Activated CD4-positive, alpha-beta T cell treated with anti-CD3 and anti-CD28 coated beads, Interleukin-2, amount 10 ng/mL, durations not matched to agents 24 days and 14 days (primary cell): ENCODE measurements at regions of chr3 and their contacts with region 1.

Region 1: GRCh38 chr3:72339116-72340030 is 508.9 kb downstream of the SHQ1 start:
- DNase-seq: no peak
- H3K4me3 Mint-ChIP-seq: no peak overlapping the region
- H3K27ac Mint-ChIP-seq: no peak overlapping the region
- H3K4me1 Mint-ChIP-seq: peaks cover 32% of the 10 kb centered on the region
- H3K27me3 Mint-ChIP-seq: no peaks in the 10 kb centered on the region

Region 2: DNA sequence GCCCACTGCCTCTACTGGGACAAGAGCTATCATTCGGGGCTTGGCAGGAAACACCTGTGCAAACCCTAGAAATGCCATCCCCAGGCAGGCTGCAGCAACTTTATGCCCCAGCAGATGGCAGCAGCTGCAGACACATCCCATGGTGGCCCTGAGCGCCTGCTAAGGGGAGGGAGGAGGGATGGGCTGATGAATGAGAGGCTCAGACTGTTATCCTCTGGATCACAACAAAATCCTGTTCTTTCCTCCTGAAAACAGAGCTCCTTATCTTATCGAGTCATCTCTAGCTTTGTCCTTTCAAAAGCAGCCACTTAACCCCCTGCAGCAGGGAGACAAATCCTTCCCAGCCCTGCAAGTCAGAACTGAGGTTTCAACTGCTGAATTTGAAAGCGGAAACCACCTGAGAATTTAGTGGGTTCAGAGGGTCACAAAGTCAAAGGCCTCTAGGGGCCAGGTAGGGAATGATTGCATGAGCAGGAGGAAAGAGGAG is 463.9 kb before region 1 on chr3:
- intact Hi-C with region 1: loop called (anchors 2 kb)
- DNase-seq: peak; percentile 93
- H3K4me3 Mint-ChIP-seq: peak overlapping the region; percentile 14
- H3K27ac Mint-ChIP-seq: peak overlapping the region; percentile 74
- H3K4me1 Mint-ChIP-seq: peaks cover 28% of the 10 kb centered on the region
- H3K27me3 Mint-ChIP-seq: peaks cover 12% of the 10 kb centered on the region

Region 3: GRCh38 chr3:72134989-72135451 is 204.4 kb before region 1 on chr3:
- intact Hi-C with region 1: loop called (anchors 2 kb)
- DNase-seq: peak; percentile 66
- H3K4me3 Mint-ChIP-seq: peak overlapping the region; percentile 75
- H3K27ac Mint-ChIP-seq: peak overlapping the region; percentile 96
- H3K4me1 Mint-ChIP-seq: peaks cover 39% of the 10 kb centered on the region
- H3K27me3 Mint-ChIP-seq: no peaks in the 10 kb centered on the region

Region 4: GRCh38 chr3:72375237-72376076 is 36.1 kb after region 1 on chr3:
- intact Hi-C with region 1: loop called (anchors 1 kb)
- DNase-seq: peak; percentile 68
- H3K4me3 Mint-ChIP-seq: peak overlapping the region; percentile 43
- H3K27ac Mint-ChIP-seq: peak overlapping the region; percentile 80
- H3K4me1 Mint-ChIP-seq: peaks cover 47% of the 10 kb centered on the region
- H3K27me3 Mint-ChIP-seq: no peaks in the 10 kb centered on the region

Region 5: DNA sequence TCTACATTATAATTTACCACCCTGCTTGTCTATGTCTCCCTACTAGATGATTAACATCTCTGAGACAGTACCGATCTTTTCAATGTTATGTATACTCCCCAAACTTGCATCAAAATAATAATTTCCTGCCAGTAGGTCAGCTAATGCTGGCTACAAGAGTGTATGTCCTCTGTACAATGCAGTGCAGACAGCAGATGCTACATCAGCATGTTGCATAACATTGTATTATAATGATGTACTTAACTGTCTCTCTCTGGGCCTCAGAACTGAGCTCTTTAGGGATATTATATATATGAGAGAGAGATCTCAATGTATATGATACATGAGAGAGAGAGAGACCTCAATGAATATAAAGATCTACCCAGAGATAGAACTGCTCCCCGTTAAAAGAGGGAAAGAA is 52.3 kb after region 1 on chr3:
- intact Hi-C with region 1: no loop called
- DNase-seq: no peak
- H3K4me3 Mint-ChIP-seq: no peak overlapping the region
- H3K27ac Mint-ChIP-seq: no peak overlapping the region
- H3K4me1 Mint-ChIP-seq: peaks cover 29% of the 10 kb centered on the region
- H3K27me3 Mint-ChIP-seq: no peaks in the 10 kb centered on the region

Region 6: GRCh38 chr3:72482589-72483321 is 143.4 kb after region 1 on chr3:
- intact Hi-C with region 1: loop called (anchors 2 kb)
- DNase-seq: peak; percentile 85
- H3K4me3 Mint-ChIP-seq: peak overlapping the region; percentile 78
- H3K27ac Mint-ChIP-seq: peak overlapping the region; percentile 96
- H3K4me1 Mint-ChIP-seq: peaks cover 67% of the 10 kb centered on the region
- H3K27me3 Mint-ChIP-seq: no peaks in the 10 kb centered on the region

Region 7: DNA sequence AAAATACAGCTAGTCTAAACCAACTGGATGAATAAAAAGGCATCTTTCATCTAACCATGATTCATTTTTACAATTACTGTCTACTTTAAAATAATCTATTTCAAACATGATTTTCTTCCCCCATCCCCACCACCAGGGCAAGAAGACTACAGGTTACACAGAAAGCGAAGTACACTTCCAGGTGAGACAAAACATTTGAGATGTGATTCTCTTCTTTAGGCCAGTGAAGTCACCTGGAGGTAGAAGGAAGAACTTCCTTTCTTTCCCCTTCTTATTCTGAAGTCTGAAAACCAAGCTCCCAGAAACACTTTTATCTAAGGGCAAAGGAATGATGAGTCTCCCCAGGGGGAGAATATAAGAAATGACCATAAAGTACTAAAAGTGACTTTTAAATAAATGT is 472.2 kb after region 1 on chr3:
- intact Hi-C with region 1: no loop called
- DNase-seq: no peak
- H3K4me3 Mint-ChIP-seq: no peak overlapping the region
- H3K27ac Mint-ChIP-seq: no peak overlapping the region
- H3K4me1 Mint-ChIP-seq: peaks cover 8% of the 10 kb centered on the region
- H3K27me3 Mint-ChIP-seq: no peaks in the 10 kb centered on the region